Right cardiac atrium (tissue), 5 donors: ENCODE measurements at regions of chr11 and their contacts with region 1.

Region 1: GRCh38 chr11:128695539-128696221 is 1.8 kb downstream of the FLI1 start:
- DNase-seq: peak; percentile 35 to 66 (median 58)
- ATAC-seq: peak; percentile 6 to 40
- H3K4me3 ChIP-seq: peak overlapping the region; percentile 70
- H3K27ac ChIP-seq: peak overlapping the region; percentile 57
- H3K4me1 ChIP-seq: no peaks in the 10 kb centered on the region
- H3K27me3 ChIP-seq: no peaks in the 10 kb centered on the region

Region 2: DNA sequence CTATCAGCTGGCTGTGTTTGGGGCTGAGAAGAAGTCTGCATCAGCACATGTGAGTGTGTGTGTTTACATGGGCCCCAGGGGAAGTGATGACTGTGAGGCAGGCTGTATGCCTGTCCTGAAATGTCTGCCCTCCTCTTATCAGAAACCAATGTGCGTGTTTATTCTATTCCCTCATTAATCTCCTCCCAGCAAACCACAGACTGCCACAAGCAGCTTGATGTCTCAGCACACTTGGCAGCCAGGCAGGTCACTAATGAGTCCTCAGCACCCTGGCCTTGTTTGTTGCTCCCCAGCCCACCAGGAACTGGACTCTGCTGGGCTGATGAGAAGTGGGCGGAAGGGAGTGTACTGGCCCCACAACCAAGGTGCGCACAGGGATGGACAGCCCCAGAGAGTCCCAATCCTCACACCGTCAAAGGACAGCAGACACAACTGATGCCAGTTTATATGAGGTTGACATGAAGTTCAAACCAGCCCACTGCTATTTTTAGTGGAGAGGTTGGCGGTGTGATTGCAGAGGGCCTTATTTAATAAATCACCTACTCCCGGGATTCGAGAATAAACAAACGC is 334.1 kb before region 1 on chr11:
- intact Hi-C with region 1: no loop called
- DNase-seq: no peak
- ATAC-seq: peak in 1 of 2 donors; percentile 64
- H3K4me3 ChIP-seq: no peak overlapping the region
- H3K27ac ChIP-seq: no peak overlapping the region
- H3K4me1 ChIP-seq: no peaks in the 10 kb centered on the region
- H3K27me3 ChIP-seq: no peaks in the 10 kb centered on the region

Region 3: DNA sequence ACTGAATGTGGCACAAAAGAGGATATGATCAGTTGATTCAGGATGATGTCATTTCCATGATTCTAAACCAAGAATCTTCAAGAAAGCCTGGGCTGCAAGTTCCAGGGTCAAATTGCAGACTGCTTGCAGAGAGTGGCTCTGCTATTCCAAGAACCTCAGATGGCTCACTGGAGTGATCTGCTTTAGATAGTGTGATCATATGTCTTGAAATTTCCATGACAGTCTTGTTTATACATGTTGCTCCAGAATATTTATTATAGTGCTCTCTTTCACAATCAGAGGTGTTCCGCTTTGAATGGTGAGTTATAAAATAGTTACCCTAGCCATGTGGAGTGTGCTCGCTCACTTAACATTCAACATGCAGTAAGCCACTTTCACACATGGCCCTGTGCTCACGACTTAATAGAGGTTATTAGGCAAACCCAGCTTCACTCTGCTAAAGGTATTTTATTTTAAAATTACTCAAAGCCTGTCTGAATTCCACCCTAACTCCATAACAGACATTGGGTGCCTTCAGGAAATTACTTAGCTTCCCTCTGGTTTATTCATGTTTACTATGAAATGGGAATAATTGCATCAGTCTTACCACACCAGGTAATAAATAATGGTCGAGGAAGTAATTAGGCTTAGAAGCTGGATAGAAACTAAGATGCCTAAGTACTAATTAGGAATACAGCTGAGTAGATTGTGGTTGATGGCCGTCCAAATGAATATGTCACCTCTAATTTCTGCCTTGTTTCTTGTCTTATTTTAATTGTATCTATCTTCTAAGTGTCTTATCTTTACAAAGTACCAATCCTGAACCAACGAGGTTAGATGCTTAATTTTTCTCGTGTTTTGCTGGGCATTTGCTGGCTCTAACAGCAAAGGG is 296.2 kb before region 1 on chr11:
- intact Hi-C with region 1: no loop called
- DNase-seq: no peak
- ATAC-seq: no peak
- H3K4me3 ChIP-seq: no peak overlapping the region
- H3K27ac ChIP-seq: no peak overlapping the region
- H3K4me1 ChIP-seq: no peaks in the 10 kb centered on the region
- H3K27me3 ChIP-seq: no peaks in the 10 kb centered on the region

Region 4: GRCh38 chr11:128738942-128739341 is 43.3 kb after region 1 on chr11:
- intact Hi-C with region 1: no loop called
- DNase-seq: no peak
- ATAC-seq: no peak
- H3K4me3 ChIP-seq: no peak overlapping the region
- H3K27ac ChIP-seq: no peak overlapping the region
- H3K4me1 ChIP-seq: peaks cover 8% of the 10 kb centered on the region
- H3K27me3 ChIP-seq: no peaks in the 10 kb centered on the region

Region 5: GRCh38 chr11:128757235-128757711 is 61.6 kb after region 1 on chr11:
- intact Hi-C with region 1: loop called in 1 of 4 experiments (anchors 10 kb)
- DNase-seq: peak in 1 of 3 donors; percentile 60
- ATAC-seq: peak; percentile 53 to 75
- H3K4me3 ChIP-seq: no peak overlapping the region
- H3K27ac ChIP-seq: no peak overlapping the region
- H3K4me1 ChIP-seq: peaks cover 8% of the 10 kb centered on the region
- H3K27me3 ChIP-seq: no peaks in the 10 kb centered on the region

Region 6: GRCh38 chr11:128904656-128905344 is 209.1 kb after region 1 on chr11:
- intact Hi-C with region 1: no loop called
- DNase-seq: peak in 2 of 3 donors; percentile 75 to 83
- ATAC-seq: peak; percentile 57
- H3K4me3 ChIP-seq: peak overlapping the region; percentile 82
- H3K27ac ChIP-seq: peak overlapping the region; percentile 59
- H3K4me1 ChIP-seq: peaks cover 14% of the 10 kb centered on the region
- H3K27me3 ChIP-seq: no peaks in the 10 kb centered on the region